ENCODE measurements at regions of chr6 and their contacts with region 1.

Region 1: DNA sequence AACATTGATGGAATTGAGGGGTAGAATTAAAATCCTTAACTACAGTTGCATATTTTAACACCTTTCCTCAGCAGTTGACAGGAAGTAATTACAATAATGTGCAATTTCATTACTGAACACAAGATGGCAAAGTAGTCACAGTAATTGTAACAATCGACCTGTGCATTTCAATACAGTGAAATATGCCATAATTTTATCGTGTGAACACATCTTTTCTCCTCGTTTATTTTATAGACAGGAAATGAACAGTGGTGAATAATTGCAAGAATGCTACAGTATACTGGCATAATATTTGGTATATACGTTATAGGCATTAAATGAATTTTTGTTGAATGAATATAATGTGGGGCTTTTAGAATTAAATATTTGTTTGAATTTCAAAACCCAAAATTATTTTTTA is 25.0 kb downstream of the CYB5R4 start:
- DNase-seq: no peak
- ATAC-seq: peak; percentile 74
- H3K4me3 Mint-ChIP-seq: no peak overlapping the region
- H3K27ac Mint-ChIP-seq: no peak overlapping the region
- H3K4me1 Mint-ChIP-seq: peaks cover 11% of the 10 kb centered on the region
- H3K27me3 Mint-ChIP-seq: no peaks in the 10 kb centered on the region

Region 2: GRCh38 chr6:83927470-83927869 is 42.9 kb after region 1 on chr6:
- CTCF ChIA-PET with region 1: no interaction called
- POLR2A ChIA-PET with region 1: no interaction called
- intact Hi-C with region 1: no loop called
- DNase-seq: no peak
- ATAC-seq: no peak
- H3K4me3 Mint-ChIP-seq: no peak overlapping the region
- H3K27ac Mint-ChIP-seq: no peak overlapping the region
- H3K4me1 Mint-ChIP-seq: no peaks in the 10 kb centered on the region
- H3K27me3 Mint-ChIP-seq: no peaks in the 10 kb centered on the region

Region 3: DNA sequence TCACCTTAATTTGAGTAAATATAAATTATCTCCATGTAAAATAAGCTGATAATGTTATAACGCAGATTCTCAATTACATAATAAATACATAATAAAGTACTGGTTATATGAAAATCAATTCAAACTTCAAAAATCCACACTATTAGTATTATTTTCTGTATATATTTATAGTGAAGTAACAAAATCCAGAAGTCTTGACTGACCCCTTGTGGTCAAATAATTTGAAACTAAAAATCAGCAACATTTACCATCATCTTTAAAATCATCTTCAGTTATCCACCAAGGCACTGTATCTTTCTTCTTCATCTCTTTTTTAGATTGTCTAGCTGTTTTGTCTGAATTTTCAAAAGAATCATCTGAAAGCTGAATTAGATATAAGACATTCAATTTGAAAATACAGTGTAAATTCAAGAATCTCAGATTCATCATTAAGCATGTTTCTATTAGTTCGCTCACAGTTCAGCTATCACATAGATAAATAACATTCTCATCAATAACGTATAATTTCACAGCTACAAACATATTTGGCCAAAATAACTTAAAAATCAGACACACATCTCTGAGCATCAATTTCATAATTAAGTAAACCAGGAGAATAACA is 336.4 kb after region 1 on chr6:
- CTCF ChIA-PET with region 1: interaction called, 7 read pairs
- POLR2A ChIA-PET with region 1: interaction called, 8 read pairs
- intact Hi-C with region 1: loop called (anchors 1 kb)
- DNase-seq: no peak
- ATAC-seq: no peak
- H3K4me3 Mint-ChIP-seq: no peak overlapping the region
- H3K27ac Mint-ChIP-seq: no peak overlapping the region
- H3K4me1 Mint-ChIP-seq: peaks cover 7% of the 10 kb centered on the region
- H3K27me3 Mint-ChIP-seq: no peaks in the 10 kb centered on the region

Region 4: GRCh38 chr6:84428300-84428907 is 543.9 kb after region 1 on chr6:
- CTCF ChIA-PET with region 1: no interaction called
- POLR2A ChIA-PET with region 1: no interaction called
- intact Hi-C with region 1: loop called in 1 of 2 experiments (anchors 10 kb)
- DNase-seq: peak; percentile 52
- ATAC-seq: no peak
- H3K4me3 Mint-ChIP-seq: no peak overlapping the region
- H3K27ac Mint-ChIP-seq: no peak overlapping the region
- H3K4me1 Mint-ChIP-seq: no peaks in the 10 kb centered on the region
- H3K27me3 Mint-ChIP-seq: peaks cover 3% of the 10 kb centered on the region

Region 5: DNA sequence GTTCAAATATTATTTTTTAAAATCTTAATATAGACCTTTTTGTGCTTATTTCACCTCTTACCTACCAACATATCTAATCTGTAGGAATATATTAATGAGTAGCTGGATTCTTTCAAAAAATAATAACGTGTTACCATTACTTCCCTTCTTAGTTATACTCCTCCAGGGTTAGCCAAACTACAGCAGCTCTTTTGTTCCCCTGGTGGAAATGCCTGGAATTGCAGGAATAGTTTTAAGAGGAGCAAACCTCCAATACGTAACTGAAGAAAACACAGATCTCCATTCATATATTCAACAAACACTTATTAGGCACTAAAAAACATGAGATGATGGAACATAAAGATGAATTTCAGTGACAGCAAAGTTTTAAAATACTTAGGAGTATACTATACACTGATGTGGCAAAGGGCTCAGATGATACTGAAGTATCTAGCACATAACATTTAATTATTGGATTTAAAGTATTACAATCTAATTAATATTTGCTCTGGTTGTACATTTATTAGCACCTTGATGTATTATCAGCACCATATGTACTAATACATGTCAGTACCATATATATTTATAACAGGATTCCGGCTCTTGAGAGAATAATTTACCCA is 801.6 kb after region 1 on chr6:
- CTCF ChIA-PET with region 1: no interaction called
- POLR2A ChIA-PET with region 1: no interaction called
- intact Hi-C with region 1: loop called in 1 of 2 experiments (anchors 10 kb)
- DNase-seq: peak; percentile 20
- ATAC-seq: no peak
- H3K4me3 Mint-ChIP-seq: no peak overlapping the region
- H3K27ac Mint-ChIP-seq: no peak overlapping the region
- H3K4me1 Mint-ChIP-seq: no peaks in the 10 kb centered on the region
- H3K27me3 Mint-ChIP-seq: no peaks in the 10 kb centered on the region

Region 6: GRCh38 chr6:84774157-84774984 is 889.8 kb after region 1 on chr6:
- CTCF ChIA-PET with region 1: no interaction called
- POLR2A ChIA-PET with region 1: no interaction called
- intact Hi-C with region 1: loop called in 1 of 2 experiments (anchors 2 kb)
- DNase-seq: peak; percentile 56
- ATAC-seq: peak; percentile 85
- H3K4me3 Mint-ChIP-seq: no peak overlapping the region
- H3K27ac Mint-ChIP-seq: no peak overlapping the region
- H3K4me1 Mint-ChIP-seq: peaks cover 3% of the 10 kb centered on the region
- H3K27me3 Mint-ChIP-seq: peaks cover 56% of the 10 kb centered on the region

Region 7: GRCh38 chr6:85126485-85127167 is 1242.1 kb after region 1 on chr6:
- CTCF ChIA-PET with region 1: no interaction called
- POLR2A ChIA-PET with region 1: no interaction called
- intact Hi-C with region 1: loop called in 1 of 2 experiments (anchors 10 kb)
- DNase-seq: peak; percentile 38
- ATAC-seq: no peak
- H3K4me3 Mint-ChIP-seq: no peak overlapping the region
- H3K27ac Mint-ChIP-seq: no peak overlapping the region
- H3K4me1 Mint-ChIP-seq: no peaks in the 10 kb centered on the region
- H3K27me3 Mint-ChIP-seq: no peaks in the 10 kb centered on the region

Region 8: DNA sequence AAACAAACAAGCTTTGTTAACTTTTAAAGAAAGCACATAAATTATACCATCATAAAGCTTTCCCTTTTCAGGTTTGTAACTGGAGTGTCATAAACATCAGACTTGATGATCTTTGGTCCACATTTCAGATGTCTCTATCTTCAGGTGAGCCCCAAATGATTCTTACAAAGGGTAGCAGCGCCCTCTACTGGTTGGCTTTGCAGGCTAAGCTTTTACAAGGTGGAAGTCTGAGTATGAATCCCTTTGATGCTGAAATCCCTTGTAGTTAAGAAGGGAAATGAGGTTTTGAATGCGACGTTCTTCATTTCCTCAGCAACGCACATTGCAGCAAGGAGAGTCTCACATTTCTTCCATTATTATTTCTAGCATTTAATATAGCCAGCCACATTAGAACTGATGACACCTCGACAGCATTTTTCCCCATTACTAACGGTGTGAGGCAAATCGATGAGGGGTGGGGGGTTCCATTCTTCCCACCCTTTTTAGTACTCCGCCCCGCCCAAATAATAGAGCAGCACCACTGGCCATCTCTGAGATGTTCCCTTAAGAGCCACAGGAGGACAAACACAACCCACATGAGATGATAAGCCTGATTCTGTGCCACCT is 1439.0 kb after region 1 on chr6:
- CTCF ChIA-PET with region 1: no interaction called
- POLR2A ChIA-PET with region 1: no interaction called
- intact Hi-C with region 1: loop called (anchors 1 to 10 kb)
- DNase-seq: peak; percentile 88
- ATAC-seq: peak; percentile 53
- H3K4me3 Mint-ChIP-seq: no peak overlapping the region
- H3K27ac Mint-ChIP-seq: no peak overlapping the region
- H3K4me1 Mint-ChIP-seq: no peaks in the 10 kb centered on the region
- H3K27me3 Mint-ChIP-seq: peaks cover 8% of the 10 kb centered on the region